ENCODE measurements at regions of chr7 and their contacts with region 1.

Region 1: GRCh38 chr7:129825496-129826267 is 127.1 kb downstream of the UBE2H start:
- DNase-seq: peak in 1 of 2 experiments; percentile 99
- H3K4me3 ChIP-seq: peak overlapping the region; percentile 57 to 91 (median 87)
- H3K27ac ChIP-seq: no peak overlapping the region
- H3K4me1 ChIP-seq: peaks cover 0 to 22% (median 8%) of the 10 kb centered on the region in 4 experiments; a peak in 6 of 7 replicates
- H3K27me3 ChIP-seq: no peaks in the 10 kb centered on the region
- CTCF ChIP-seq: peak; percentile 48 to 82 (median 63)
- EP300 ChIP-seq: no peak
- POLR2A ChIP-seq: no peak
- RAD21 ChIP-seq: peak; percentile 70 to 75

Region 2: DNA sequence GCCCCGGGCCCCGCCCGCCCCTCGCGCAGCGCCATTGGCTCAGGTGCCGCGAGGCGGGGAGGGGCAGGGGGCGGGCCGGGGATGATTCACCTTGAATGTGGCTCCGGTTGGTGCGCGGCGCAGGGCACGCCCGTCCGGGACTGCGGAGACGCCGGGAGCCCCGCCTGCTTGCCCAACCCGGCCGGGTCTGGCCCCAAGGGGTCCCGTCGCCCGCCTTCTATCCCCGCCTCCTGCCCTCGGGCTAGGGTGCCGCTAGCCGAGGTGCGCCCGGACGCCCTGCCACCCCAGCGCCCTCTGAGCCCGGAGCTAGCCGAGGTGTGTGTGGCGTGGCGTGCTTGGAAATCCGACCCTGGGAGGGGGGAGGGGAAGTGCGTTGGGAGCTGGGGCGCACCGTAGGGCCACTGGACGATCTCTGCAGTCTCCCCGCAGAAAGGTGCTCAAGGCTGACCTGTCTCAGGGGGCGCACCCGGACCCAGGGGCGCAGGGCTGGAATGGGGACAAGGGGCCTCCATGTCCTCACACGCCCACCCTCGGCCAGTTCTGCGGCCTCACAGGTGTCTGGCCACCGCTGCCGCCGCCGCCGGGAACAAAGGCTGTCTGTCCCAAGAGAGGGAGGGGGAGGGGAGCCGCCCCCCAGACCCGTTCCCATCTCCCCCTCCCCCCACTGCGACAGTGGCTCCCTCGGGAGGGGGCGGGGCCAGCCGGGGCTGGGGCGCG is 45.3 kb before region 1 on chr7:
- CTCF ChIA-PET with region 1: interaction called, 45 read pairs
- POLR2A ChIA-PET with region 1: interaction called, 36 read pairs
- DNase-seq: peak; percentile 74 to 92
- H3K4me3 ChIP-seq: peak overlapping the region; percentile 55 to 76 (median 61)
- H3K27ac ChIP-seq: no peak overlapping the region
- H3K4me1 ChIP-seq: peaks cover 12 to 55% (median 40%) of the 10 kb centered on the region in 4 experiments
- H3K27me3 ChIP-seq: peaks cover 55 to 78% (median 73%) of the 10 kb centered on the region in 4 experiments
- CTCF ChIP-seq: no peak
- EP300 ChIP-seq: no peak; a peak in 1 of 3 replicates
- POLR2A ChIP-seq: no peak
- RAD21 ChIP-seq: no peak

Region 3: DNA sequence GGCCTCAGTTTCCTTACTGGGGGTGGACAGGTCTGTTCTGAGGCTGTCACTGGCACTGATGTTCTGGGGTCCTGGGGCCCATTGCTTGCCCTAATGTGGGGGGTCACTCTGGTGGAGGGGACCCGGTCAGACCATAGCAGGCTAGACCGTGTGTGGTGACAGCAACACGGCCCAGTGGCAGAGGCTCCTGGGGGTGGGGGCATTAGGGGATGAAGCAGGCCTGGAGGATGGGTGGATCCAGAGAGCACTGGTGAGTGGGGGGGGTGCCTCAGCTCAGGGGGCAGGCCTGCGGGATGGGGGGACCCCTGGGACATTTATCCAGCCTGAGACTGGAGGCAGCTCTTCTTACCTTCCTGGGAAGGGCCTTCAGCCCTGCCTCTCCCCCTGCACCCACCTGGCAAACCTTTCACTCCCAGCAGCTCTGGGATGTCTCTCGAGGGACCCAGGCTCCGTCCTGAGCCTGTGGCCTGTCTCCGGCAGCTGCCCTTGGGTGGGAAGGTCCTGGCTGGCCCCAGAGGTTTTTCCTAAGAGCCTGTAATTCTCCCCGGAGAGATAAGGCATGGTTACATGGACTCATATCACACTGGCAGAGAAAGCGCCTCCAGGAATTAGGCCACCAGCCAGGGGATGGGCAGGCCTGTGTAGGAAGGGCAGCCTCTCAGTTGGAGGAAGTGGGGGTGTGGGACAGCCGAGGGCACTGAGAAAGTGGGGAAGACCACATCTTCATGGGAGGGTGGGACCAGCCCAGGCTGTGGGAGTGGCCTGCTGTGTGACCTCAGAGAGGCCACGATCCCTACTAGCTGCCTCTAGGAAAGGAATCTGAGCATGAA is 20.6 kb before region 1 on chr7:
- CTCF ChIA-PET with region 1: interaction called, 18 read pairs
- POLR2A ChIA-PET with region 1: interaction called, 4 read pairs
- DNase-seq: no peak
- H3K4me3 ChIP-seq: no peak overlapping the region
- H3K27ac ChIP-seq: no peak overlapping the region
- H3K4me1 ChIP-seq: peaks cover 0 to 9% (median 4%) of the 10 kb centered on the region in 4 experiments; a peak in 4 of 7 replicates
- H3K27me3 ChIP-seq: no peaks in the 10 kb centered on the region
- CTCF ChIP-seq: no peak
- EP300 ChIP-seq: no peak
- POLR2A ChIP-seq: no peak
- RAD21 ChIP-seq: no peak

Region 4: DNA sequence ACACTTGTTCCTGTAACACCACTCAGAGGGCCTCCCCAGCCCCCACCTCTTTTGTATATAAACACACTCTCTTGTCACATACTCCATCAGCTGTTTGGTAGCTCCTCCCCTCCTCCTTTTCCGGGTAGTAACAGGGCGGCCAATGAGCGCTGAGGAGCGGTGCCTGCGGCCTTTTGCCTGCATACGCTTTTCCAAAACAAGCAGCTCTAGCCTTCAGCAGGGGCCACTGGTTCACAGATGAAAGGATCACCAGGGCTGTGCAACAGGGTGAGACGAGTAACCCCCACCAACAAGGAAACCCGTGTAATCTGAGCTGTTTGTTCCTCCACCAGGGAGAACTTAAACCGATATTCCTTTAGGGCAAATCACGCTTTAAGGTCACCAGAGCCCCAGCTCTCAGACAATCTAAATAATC is 123.2 kb after region 1 on chr7:
- CTCF ChIA-PET with region 1: interaction called, 12 read pairs
- POLR2A ChIA-PET with region 1: interaction called, 6 read pairs
- DNase-seq: peak; percentile 79 to 80
- H3K4me3 ChIP-seq: peak overlapping the region; percentile 70 to 94 (median 83); a peak in 7 of 8 replicates
- H3K27ac ChIP-seq: peak overlapping the region; percentile 93
- H3K4me1 ChIP-seq: peaks cover 0 to 7% (median 4%) of the 10 kb centered on the region in 4 experiments; a peak in 4 of 7 replicates
- H3K27me3 ChIP-seq: no peaks in the 10 kb centered on the region
- CTCF ChIP-seq: peak in 1 of 3 experiments; percentile 5; a peak in 1 of 4 replicates
- EP300 ChIP-seq: peak in 1 of 2 experiments; percentile 34; a peak in 1 of 3 replicates
- POLR2A ChIP-seq: peak; percentile 40 to 74
- RAD21 ChIP-seq: peak; percentile 0 to 1; a peak in 1 of 4 replicates